H1 (cell line): ENCODE measurements at regions of chr1 and their contacts with region 1.

Region 1: DNA sequence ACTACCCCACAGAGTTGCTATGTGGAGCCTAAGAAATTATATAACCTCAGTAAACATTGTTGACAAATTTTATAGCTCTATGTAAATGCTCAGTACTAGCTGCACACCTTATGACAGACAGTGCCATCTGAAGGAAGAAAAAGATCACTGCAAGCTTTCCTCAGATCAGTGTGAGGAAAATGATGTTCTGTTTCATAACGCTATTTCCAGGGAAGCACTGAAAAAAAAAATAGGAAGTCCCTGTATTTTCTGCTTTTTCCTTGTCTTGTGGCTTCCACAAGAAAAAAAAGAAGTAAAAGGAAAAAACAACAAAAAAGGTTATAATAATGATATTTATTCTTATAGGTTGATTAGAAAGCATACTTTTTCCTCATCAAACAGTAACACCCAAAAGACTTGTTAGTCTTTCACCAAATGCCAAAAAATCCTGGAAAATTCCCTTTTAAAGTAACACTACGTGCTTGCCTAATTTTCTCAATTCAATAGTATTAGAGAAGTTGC is 23.2 kb downstream of the LYST start:
- DNase-seq: no peak
- H3K4me3 ChIP-seq: no peak overlapping the region
- H3K27ac ChIP-seq: no peak overlapping the region
- H3K4me1 ChIP-seq: no peaks in the 10 kb centered on the region
- H3K27me3 ChIP-seq: no peaks in the 10 kb centered on the region
- CTCF ChIP-seq: peak in 2 of 3 experiments; percentile 22 to 41; a peak in 2 of 4 replicates
- EP300 ChIP-seq: no peak
- POLR2A ChIP-seq: no peak
- RAD21 ChIP-seq: peak; percentile 54 to 61

Region 2: DNA sequence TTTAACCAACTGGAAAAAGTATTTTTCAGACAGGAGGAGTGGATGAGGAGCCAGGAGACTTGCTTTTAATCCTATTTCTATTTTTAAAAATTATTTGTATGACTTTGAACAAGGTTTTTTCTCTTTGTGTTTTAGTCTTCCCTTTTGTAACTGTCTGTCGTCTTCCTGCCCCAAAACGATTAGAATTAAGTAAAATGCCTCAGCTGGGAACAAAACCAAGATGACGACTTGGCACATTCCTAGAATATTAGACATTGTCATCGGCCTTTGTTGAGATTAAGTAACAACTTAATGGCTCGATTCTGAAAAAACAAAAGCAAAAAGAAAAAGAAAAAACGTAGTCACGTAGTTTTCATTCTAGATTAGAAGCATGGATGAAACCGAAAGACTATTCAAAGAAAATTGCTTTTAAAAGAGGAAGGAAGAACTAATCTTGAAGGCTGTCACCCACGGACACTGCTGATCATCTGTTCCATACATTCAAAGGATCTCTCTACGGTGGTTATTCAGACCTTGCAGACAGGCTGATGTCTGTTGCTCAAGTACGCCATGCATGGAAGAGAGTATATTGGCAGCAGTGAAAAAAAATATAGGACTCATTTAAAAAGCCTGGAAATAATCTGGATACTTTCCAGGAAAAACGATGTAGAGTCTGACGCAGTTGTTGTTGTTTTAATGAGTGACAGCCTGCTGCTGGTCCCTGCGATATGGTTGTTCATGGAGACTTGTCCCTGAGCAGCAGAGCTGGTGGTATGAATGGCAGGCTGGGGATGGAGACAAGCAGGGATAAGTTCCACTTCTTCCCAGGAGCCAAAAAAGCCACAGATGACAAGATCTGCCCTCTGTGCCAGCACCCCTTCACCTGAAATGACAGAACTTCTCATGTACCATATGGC is 210.8 kb before region 1 on chr1:
- CTCF ChIA-PET with region 1: no interaction called
- POLR2A ChIA-PET with region 1: no interaction called
- DNase-seq: no peak
- H3K4me3 ChIP-seq: no peak overlapping the region
- H3K27ac ChIP-seq: no peak overlapping the region
- H3K4me1 ChIP-seq: peaks cover 3 to 11% (median 9%) of the 10 kb centered on the region in 4 experiments; a peak in 6 of 7 replicates
- H3K27me3 ChIP-seq: no peaks in the 10 kb centered on the region
- CTCF ChIP-seq: no peak
- EP300 ChIP-seq: no peak
- POLR2A ChIP-seq: no peak
- RAD21 ChIP-seq: no peak

Region 3: GRCh38 chr1:235708390-235708962 is 135.0 kb before region 1 on chr1:
- CTCF ChIA-PET with region 1: no interaction called
- POLR2A ChIA-PET with region 1: no interaction called
- DNase-seq: no peak
- H3K4me3 ChIP-seq: no peak overlapping the region
- H3K27ac ChIP-seq: no peak overlapping the region
- H3K4me1 ChIP-seq: peaks cover 0 to 3% (median 1%) of the 10 kb centered on the region in 4 experiments; a peak in 2 of 7 replicates
- H3K27me3 ChIP-seq: peaks cover 0 to 1% (median 0%) of the 10 kb centered on the region in 4 experiments; a peak in 1 of 7 replicates
- CTCF ChIP-seq: no peak
- EP300 ChIP-seq: no peak
- POLR2A ChIP-seq: no peak
- RAD21 ChIP-seq: no peak

Region 4: GRCh38 chr1:235783148-235783776 is 60.2 kb before region 1 on chr1:
- CTCF ChIA-PET with region 1: interaction called, 16 read pairs
- POLR2A ChIA-PET with region 1: no interaction called
- DNase-seq: no peak
- H3K4me3 ChIP-seq: no peak overlapping the region
- H3K27ac ChIP-seq: no peak overlapping the region
- H3K4me1 ChIP-seq: no peaks in the 10 kb centered on the region
- H3K27me3 ChIP-seq: no peaks in the 10 kb centered on the region
- CTCF ChIP-seq: peak in 1 of 3 experiments; percentile 12; a peak in 1 of 4 replicates
- EP300 ChIP-seq: no peak
- POLR2A ChIP-seq: no peak
- RAD21 ChIP-seq: peak in 1 of 2 experiments; percentile 65; a peak in 3 of 4 replicates

Region 5: GRCh38 chr1:235821361-235821981 is 22.0 kb before region 1 on chr1:
- CTCF ChIA-PET with region 1: interaction called, 16 read pairs
- POLR2A ChIA-PET with region 1: interaction called, 3 read pairs
- DNase-seq: no peak
- H3K4me3 ChIP-seq: no peak overlapping the region
- H3K27ac ChIP-seq: no peak overlapping the region
- H3K4me1 ChIP-seq: peaks cover 0 to 4% (median under 1%) of the 10 kb centered on the region in 4 experiments; a peak in 1 of 7 replicates
- H3K27me3 ChIP-seq: no peaks in the 10 kb centered on the region
- CTCF ChIP-seq: no peak
- EP300 ChIP-seq: no peak
- POLR2A ChIP-seq: no peak
- RAD21 ChIP-seq: no peak

Region 6: GRCh38 chr1:235831148-235831547 is 12.4 kb before region 1 on chr1:
- CTCF ChIA-PET with region 1: interaction called, 53 read pairs
- POLR2A ChIA-PET with region 1: no interaction called
- DNase-seq: no peak
- H3K4me3 ChIP-seq: no peak overlapping the region
- H3K27ac ChIP-seq: no peak overlapping the region
- H3K4me1 ChIP-seq: no peaks in the 10 kb centered on the region
- H3K27me3 ChIP-seq: no peaks in the 10 kb centered on the region
- CTCF ChIP-seq: no peak
- EP300 ChIP-seq: no peak
- POLR2A ChIP-seq: no peak
- RAD21 ChIP-seq: no peak

Region 7: GRCh38 chr1:235854347-235854746 is 10.8 kb after region 1 on chr1:
- CTCF ChIA-PET with region 1: interaction called, 10 read pairs
- POLR2A ChIA-PET with region 1: no interaction called
- DNase-seq: no peak
- H3K4me3 ChIP-seq: no peak overlapping the region
- H3K27ac ChIP-seq: no peak overlapping the region
- H3K4me1 ChIP-seq: no peaks in the 10 kb centered on the region
- H3K27me3 ChIP-seq: no peaks in the 10 kb centered on the region
- CTCF ChIP-seq: no peak
- EP300 ChIP-seq: no peak
- POLR2A ChIP-seq: no peak
- RAD21 ChIP-seq: no peak

Region 8: GRCh38 chr1:235866913-235867845 is 23.7 kb after region 1 on chr1:
- CTCF ChIA-PET with region 1: interaction called, 10 read pairs
- POLR2A ChIA-PET with region 1: interaction called, 4 read pairs
- DNase-seq: peak; percentile 88 to 99
- H3K4me3 ChIP-seq: peak overlapping the region; percentile 72 to 96 (median 80)
- H3K27ac ChIP-seq: peak overlapping the region; percentile 11
- H3K4me1 ChIP-seq: no peaks in the 10 kb centered on the region; a peak in 1 of 7 replicates
- H3K27me3 ChIP-seq: peaks cover 2 to 17% (median 11%) of the 10 kb centered on the region in 4 experiments
- CTCF ChIP-seq: no peak
- EP300 ChIP-seq: no peak; a peak in 1 of 3 replicates
- POLR2A ChIP-seq: peak in 1 of 2 experiments; percentile 71; a peak in 2 of 3 replicates
- RAD21 ChIP-seq: no peak